ENCODE measurements at regions of chr1 and their contacts with region 1.

Region 1: GRCh38 chr1:58515794-58516401 is 30.6 kb downstream of the OMA1 start:
- DNase-seq: peak in 1 of 2 donors; percentile 29
- ATAC-seq: peak; percentile 69 to 95 (median 81)
- H3K4me3 ChIP-seq: no peak overlapping the region
- H3K27ac ChIP-seq: peak overlapping the region; percentile 13
- H3K4me1 ChIP-seq: peaks cover 4% of the 10 kb centered on the region
- H3K27me3 ChIP-seq: no peaks in the 10 kb centered on the region
- CTCF ChIP-seq: peak; percentile 75

Region 2: GRCh38 chr1:57761628-57762027 is 754.3 kb before region 1 on chr1:
- intact Hi-C with region 1: no loop called
- DNase-seq: no peak
- ATAC-seq: no peak
- H3K4me3 ChIP-seq: no peak overlapping the region
- H3K27ac ChIP-seq: no peak overlapping the region
- H3K4me1 ChIP-seq: no peaks in the 10 kb centered on the region
- H3K27me3 ChIP-seq: no peaks in the 10 kb centered on the region
- CTCF ChIP-seq: no peak

Region 3: DNA sequence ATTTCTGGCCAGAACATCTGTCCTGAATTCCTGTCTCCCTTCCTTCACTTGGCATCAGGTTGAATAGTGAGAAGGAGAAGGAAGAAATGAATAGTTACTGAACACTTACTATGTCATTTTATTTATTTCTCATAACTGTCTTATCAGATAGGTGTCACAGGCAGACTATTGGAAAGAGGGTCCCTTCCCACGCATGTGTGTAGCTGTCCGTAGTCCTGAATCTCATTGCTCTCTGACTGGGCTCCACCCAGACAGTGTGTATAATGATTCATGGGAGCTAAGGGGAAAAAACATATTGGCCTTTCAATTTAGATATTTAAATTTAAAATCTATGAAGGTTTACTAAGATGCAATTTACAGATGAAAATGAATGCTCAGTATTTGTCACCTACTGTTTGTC is 55.4 kb before region 1 on chr1:
- intact Hi-C with region 1: no loop called
- DNase-seq: no peak
- ATAC-seq: no peak
- H3K4me3 ChIP-seq: no peak overlapping the region
- H3K27ac ChIP-seq: no peak overlapping the region
- H3K4me1 ChIP-seq: peaks cover 4% of the 10 kb centered on the region
- H3K27me3 ChIP-seq: no peaks in the 10 kb centered on the region
- CTCF ChIP-seq: no peak

Region 4: GRCh38 chr1:58539553-58539952 is 23.7 kb after region 1 on chr1:
- intact Hi-C with region 1: loop called in 1 of 2 experiments (anchors 2 kb)
- DNase-seq: no peak
- ATAC-seq: no peak
- H3K4me3 ChIP-seq: no peak overlapping the region
- H3K27ac ChIP-seq: no peak overlapping the region
- H3K4me1 ChIP-seq: no peaks in the 10 kb centered on the region
- H3K27me3 ChIP-seq: no peaks in the 10 kb centered on the region
- CTCF ChIP-seq: no peak

Region 5: DNA sequence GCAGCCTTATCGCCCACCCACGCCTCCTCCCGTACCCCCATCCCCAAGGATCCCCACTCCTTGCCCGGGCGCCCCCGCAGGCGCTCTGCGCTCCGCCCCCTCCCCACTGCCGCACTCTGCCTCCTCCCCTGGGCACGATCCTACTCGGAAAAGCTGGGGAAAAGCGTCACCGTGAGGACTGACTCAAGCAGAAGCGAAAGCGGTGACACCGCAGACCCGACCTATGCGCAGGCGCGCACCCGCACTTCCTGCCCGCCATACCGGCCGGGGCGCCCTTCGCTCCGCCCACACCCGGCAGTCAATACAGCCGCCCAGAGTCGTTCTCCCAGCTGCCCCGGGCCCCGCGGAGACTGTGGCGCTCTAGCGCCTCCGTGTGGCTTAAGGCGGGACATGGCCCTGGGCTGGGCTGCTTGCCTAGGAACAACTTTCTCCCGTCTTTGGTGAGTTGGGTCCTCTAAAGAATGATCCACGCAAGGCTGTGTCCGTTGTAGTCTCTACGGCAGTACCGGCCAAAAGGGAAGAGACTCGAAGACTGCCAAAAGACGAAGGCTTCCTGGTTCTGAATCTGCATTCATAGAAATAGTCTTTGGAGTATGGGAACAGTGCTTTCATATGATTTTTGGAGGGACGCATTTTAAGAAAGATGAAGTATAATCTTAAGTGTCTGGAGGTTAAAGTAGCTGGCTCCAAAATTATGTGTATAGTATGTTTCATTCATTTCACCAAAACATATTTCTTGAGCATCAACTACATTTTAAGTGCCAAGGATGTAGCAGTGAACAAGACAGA is 30.8 kb after region 1 on chr1 and contains the start of gene OMA1:
- intact Hi-C with region 1: loop called (anchors 2 kb)
- DNase-seq: peak; percentile 98 to 99
- ATAC-seq: peak; percentile 98 to 99 (median 99)
- H3K4me3 ChIP-seq: peak within 1 kb of the TSS; percentile 81
- H3K27ac ChIP-seq: peak within 1 kb of the TSS; percentile 98
- H3K4me1 ChIP-seq: peaks cover 6% of the 10 kb centered on the region
- H3K27me3 ChIP-seq: no peaks in the 10 kb centered on the region
- CTCF ChIP-seq: peak; percentile 97
- total RNA-seq, gene OMA1: 16.5 to 30.4 (median 23.7) TPM

Region 6: GRCh38 chr1:58652651-58653184 is 136.8 kb after region 1 on chr1:
- intact Hi-C with region 1: loop called (anchors 1 to 2 kb)
- DNase-seq: peak in 1 of 2 donors; percentile 27
- ATAC-seq: peak; percentile 85 to 93 (median 90)
- H3K4me3 ChIP-seq: no peak overlapping the region
- H3K27ac ChIP-seq: no peak overlapping the region
- H3K4me1 ChIP-seq: no peaks in the 10 kb centered on the region
- H3K27me3 ChIP-seq: no peaks in the 10 kb centered on the region
- CTCF ChIP-seq: peak; percentile 91

Region 7: GRCh38 chr1:58683519-58683918 is 167.6 kb after region 1 on chr1:
- intact Hi-C with region 1: no loop called
- DNase-seq: no peak
- ATAC-seq: peak in 3 of 4 donors; percentile 28 to 60 (median 42)
- H3K4me3 ChIP-seq: no peak overlapping the region
- H3K27ac ChIP-seq: peak overlapping the region; percentile 50
- H3K4me1 ChIP-seq: peaks cover 25% of the 10 kb centered on the region
- H3K27me3 ChIP-seq: no peaks in the 10 kb centered on the region
- CTCF ChIP-seq: no peak

Region 8: DNA sequence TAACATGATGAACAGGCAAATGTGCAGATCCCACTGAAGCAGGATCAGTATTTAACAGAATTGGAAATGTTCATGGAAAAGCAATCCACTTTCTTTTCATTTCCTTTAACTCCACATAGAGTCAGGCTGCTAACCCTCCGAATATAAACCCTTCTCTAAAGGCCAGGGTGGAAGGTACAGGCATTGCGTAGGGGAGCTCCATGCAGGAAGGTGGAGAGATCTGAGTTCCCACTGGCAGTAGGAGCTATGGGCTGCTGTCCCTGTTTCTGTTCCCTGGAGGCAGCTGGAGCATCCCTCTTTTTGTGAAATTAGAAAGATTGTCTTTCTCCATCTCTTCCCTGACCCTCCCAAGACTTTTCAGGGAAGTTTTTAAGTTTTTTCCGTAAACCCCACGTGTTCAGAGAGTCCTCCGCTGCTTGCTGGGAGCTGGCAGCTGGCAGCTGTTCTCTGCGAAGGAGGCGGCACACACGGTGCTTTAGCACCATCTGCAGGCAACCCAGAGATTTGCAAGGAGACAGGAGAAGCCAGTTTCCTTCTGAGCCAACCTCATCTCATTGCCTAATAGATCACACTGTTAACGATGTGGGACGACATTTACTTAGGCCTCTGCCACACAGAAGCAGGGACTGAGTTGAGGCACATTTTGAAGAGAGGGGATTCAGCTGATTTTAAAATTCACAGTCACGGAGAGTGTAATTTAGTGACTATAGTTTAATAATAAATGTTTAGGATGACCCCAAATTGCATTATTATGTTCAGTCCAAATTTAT is 1243.4 kb after region 1 on chr1:
- intact Hi-C with region 1: loop called in 1 of 2 experiments (anchors 10 kb)
- DNase-seq: peak; percentile 81 to 92
- ATAC-seq: peak; percentile 96 to 97 (median 97)
- H3K4me3 ChIP-seq: peak overlapping the region; percentile 51
- H3K27ac ChIP-seq: peak overlapping the region; percentile 79
- H3K4me1 ChIP-seq: peaks cover 12% of the 10 kb centered on the region
- H3K27me3 ChIP-seq: no peaks in the 10 kb centered on the region
- CTCF ChIP-seq: peak; percentile 98

Measured in psoas muscle (tissue), 8 donors.